Right lobe of liver (tissue), 6 donors: ENCODE measurements at regions of chr10 and their contacts with region 1.

Region 1: DNA sequence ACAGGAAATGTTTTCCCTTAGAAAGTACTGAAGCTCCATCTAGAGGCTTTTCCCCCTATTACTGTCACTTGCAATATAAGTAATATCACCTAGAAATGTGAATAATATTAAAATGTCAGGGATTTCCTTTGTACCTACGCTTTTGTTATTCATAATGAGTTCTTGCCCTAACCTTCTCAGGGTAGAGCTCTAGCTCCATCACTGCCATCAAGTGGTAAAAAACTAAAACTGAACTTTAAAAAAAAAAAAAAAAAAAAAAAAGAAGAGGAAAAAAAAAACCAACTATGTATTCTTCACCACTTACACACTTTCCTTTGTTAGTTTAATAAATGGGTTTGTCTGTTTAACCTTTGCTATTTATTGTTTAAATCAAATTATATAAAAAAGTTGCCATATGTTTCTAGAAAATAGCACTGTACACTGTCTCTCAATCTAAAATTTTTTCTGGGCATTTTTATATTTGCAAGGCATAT is 49.9 kb downstream of the DNAJC1 start:
- DNase-seq: no peak
- ATAC-seq: peak; percentile 52 to 74 (median 64)
- H3K4me3 ChIP-seq: no peak overlapping the region
- H3K27ac ChIP-seq: no peak overlapping the region
- H3K4me1 ChIP-seq: no peaks in the 10 kb centered on the region
- H3K27me3 ChIP-seq: no peaks in the 10 kb centered on the region
- CTCF ChIP-seq: peak in 3 of 4 donors; percentile 46 to 51 (median 47)
- POLR2A ChIP-seq: no peak

Region 2: GRCh38 chr10:21278491-21279239 is 675.0 kb before region 1 on chr10:
- intact Hi-C with region 1: loop called in 1 of 2 experiments (anchors 5 kb)
- DNase-seq: peak; percentile 86 to 90 (median 90)
- ATAC-seq: peak; percentile 98 to 100 (median 98)
- H3K4me3 ChIP-seq: no peak overlapping the region
- H3K27ac ChIP-seq: no peak overlapping the region
- H3K4me1 ChIP-seq: no peaks in the 10 kb centered on the region
- H3K27me3 ChIP-seq: no peaks in the 10 kb centered on the region
- CTCF ChIP-seq: peak; percentile 74 to 82 (median 77)
- POLR2A ChIP-seq: no peak

Region 3: GRCh38 chr10:21495752-21496342 is 457.8 kb before region 1 on chr10:
- intact Hi-C with region 1: loop called in 1 of 2 experiments (anchors 10 kb)
- DNase-seq: peak; percentile 91 to 95 (median 93)
- ATAC-seq: peak; percentile 76 to 86 (median 78)
- H3K4me3 ChIP-seq: peak overlapping the region; percentile 80 to 88 (median 85)
- H3K27ac ChIP-seq: peak overlapping the region; percentile 64 to 73 (median 66)
- H3K4me1 ChIP-seq: peaks cover 0 to 29% (median 3%) of the 10 kb centered on the region in 4 donors
- H3K27me3 ChIP-seq: no peaks in the 10 kb centered on the region
- CTCF ChIP-seq: peak; percentile 99 to 100 (median 99)
- POLR2A ChIP-seq: peak; percentile 59

Region 4: GRCh38 chr10:22158426-22158825 is 204.8 kb after region 1 on chr10:
- intact Hi-C with region 1: no loop called
- DNase-seq: no peak
- ATAC-seq: no peak
- H3K4me3 ChIP-seq: no peak overlapping the region
- H3K27ac ChIP-seq: no peak overlapping the region
- H3K4me1 ChIP-seq: no peaks in the 10 kb centered on the region
- H3K27me3 ChIP-seq: no peaks in the 10 kb centered on the region
- CTCF ChIP-seq: no peak
- POLR2A ChIP-seq: no peak